Activated T-helper 1 cell treated with anti-CD3 and anti-CD28 coated beads, Interleukin-12 subunit alpha, Interleukin-12 subunit beta, Interleukin-2, Interleukin-4 antibody, amounts not matched to agents 30 ng/mL and 10 ng/mL and 1 ng/mL, durations not matched to agents 14 hours and 24 hours and 36 hours (primary cell): ENCODE measurements at regions of chr1 and their contacts with region 1.

Region 1: DNA sequence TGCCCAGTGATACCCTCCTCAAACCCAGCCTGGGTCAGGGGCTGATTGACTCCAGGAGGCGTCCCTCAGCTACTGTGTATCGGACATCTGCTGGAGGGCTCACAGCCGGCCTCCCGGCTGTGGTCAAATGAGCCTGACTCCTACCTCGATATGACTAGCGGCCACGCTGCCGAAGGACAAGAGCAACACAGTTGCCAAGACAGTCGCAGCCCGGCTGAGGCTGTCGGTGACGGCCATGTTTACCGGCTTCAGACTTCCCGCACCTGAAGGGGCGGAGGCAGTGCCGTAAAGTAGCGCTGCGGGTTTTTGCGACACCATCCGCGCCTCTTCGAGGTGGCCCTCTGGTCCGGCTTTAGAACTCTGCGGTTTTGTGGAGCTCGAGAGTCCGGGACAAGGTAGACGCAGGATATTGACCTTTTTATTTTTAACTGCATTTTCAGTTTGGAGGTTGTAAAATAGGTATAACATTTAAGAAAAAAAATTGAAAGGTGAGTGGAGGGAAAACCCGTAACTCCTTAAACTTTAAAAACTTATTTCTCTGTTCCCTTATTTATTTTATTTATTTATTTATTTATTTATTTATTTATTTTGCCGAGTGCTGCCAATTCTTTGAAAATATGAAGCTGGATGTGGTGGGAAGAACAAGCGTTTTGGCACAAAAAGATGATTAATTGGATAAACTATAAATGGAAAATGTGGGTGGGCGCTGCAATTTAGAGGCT is at the start of gene PIGK:
- DNase-seq: peak; percentile 85
- H3K4me3 Mint-ChIP-seq: peak within 1 kb of the TSS; percentile 92
- H3K27ac Mint-ChIP-seq: peak within 1 kb of the TSS; percentile 84
- H3K4me1 Mint-ChIP-seq: peaks cover 26% of the 10 kb centered on the region
- H3K27me3 Mint-ChIP-seq: no peaks in the 10 kb centered on the region
- total RNA-seq, gene PIGK: 15.9 and 19.4 TPM in 2 replicates

Region 2: GRCh38 chr1:75785983-75786853 is 1433.1 kb before region 1 on chr1 and contains the start of gene RABGGTB:
- intact Hi-C with region 1: loop called (anchors 5 kb)
- DNase-seq: peak; percentile 93
- H3K4me3 Mint-ChIP-seq: peak within 1 kb of the TSS; percentile 97
- H3K27ac Mint-ChIP-seq: peak within 1 kb of the TSS; percentile 99
- H3K4me1 Mint-ChIP-seq: peaks cover 46% of the 10 kb centered on the region
- H3K27me3 Mint-ChIP-seq: peaks cover 1% of the 10 kb centered on the region
- total RNA-seq, gene RABGGTB: 233 and 240 TPM in 2 replicates

Region 3: GRCh38 chr1:76269155-76269554 is 950.2 kb before region 1 on chr1:
- intact Hi-C with region 1: loop called (anchors 5 kb)
- DNase-seq: no peak
- H3K4me3 Mint-ChIP-seq: peak overlapping the region; percentile 48
- H3K27ac Mint-ChIP-seq: peak overlapping the region; percentile 77
- H3K4me1 Mint-ChIP-seq: peaks cover 71% of the 10 kb centered on the region
- H3K27me3 Mint-ChIP-seq: no peaks in the 10 kb centered on the region

Region 4: DNA sequence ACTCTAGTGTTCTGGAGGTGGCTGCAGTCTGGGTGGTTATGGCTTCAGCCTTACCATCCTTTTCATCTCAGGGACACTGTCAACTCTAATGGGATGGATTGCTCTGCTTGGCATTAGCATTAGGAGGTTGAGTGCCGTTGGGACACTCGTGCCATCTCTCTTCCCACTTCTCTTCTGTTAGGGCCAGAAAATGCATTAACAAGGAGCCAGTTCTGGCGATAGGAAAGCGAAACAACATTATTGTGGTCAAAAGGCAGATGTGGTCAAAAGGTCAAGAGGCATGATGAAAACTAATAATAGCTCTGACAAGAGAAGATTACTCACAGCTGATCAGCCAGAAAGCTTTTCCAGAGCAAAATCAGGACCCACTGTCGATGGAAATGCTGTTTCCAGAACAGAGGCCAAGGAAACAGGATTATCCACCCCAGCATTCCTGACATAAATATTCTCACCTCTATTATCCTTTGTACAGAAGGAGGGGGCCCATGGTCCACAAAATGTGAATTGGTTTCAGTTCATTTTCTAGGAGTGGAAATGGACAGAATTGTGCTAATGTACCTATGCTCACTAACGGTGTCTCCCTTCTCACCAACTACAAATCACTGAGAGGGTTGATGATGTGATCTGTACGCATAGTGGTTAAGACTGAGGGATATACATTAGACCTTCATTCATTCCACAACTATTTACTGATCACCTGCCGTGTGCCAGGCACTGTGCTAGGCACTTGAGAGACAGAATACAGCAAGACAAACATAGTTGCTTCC is 280.1 kb before region 1 on chr1:
- intact Hi-C with region 1: no loop called
- DNase-seq: no peak
- H3K4me3 Mint-ChIP-seq: no peak overlapping the region
- H3K27ac Mint-ChIP-seq: no peak overlapping the region
- H3K4me1 Mint-ChIP-seq: no peaks in the 10 kb centered on the region
- H3K27me3 Mint-ChIP-seq: no peaks in the 10 kb centered on the region

Region 5: DNA sequence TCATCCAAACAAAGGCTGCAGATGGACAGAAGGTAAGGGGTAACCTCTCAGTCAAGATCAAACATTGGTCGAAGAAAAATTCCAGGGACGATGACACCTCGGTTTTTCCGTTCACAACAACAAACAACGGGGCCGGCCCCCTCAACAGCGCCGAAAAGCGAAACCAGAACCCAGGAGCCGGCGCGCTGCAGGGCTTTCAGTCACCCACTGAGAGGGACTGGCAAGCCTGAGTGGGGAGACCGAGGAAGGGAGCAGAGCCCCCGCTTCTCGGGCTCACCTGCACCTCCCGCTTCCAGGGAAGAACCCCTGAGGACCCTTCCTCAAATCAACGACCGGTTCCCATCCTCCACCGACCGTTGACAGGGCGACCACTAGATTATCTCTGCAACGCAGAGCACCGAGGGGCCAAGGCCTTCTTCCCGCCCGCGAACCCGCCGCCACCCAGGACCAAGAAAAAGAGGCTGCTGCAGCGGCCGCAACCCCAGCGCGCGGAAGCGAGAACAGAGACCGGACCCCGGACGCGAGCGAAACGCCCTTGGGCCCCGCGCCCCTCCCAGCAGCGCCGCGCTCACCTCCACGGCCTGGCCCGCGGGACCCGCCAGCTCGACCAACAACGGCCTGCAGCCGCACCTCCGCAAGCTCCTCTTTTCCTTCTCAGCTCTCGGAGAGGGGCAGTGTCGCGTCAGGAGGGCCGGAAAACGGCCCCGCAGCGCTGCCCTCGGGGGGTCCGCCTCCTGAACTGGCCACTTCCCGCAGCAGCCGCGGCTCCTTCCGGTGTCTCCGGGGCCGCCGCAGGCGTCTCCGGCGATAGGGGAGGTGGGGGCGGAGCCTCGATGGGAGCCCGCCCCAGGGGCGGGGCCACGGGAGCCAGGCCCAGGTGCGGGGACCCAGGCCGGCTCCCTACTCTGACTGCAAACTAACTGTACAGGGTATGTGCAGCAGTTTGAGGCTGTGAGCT is 540.0 kb after region 1 on chr1 and contains the start of gene USP33:
- intact Hi-C with region 1: loop called (anchors 10 kb)
- DNase-seq: peak; percentile 89
- H3K4me3 Mint-ChIP-seq: peak within 1 kb of the TSS; percentile 92
- H3K27ac Mint-ChIP-seq: peak within 1 kb of the TSS; percentile 88
- H3K4me1 Mint-ChIP-seq: peaks cover 28% of the 10 kb centered on the region
- H3K27me3 Mint-ChIP-seq: peaks cover 2% of the 10 kb centered on the region
- total RNA-seq, gene USP33: 49.9 and 53.1 TPM in 2 replicates

Region 6: DNA sequence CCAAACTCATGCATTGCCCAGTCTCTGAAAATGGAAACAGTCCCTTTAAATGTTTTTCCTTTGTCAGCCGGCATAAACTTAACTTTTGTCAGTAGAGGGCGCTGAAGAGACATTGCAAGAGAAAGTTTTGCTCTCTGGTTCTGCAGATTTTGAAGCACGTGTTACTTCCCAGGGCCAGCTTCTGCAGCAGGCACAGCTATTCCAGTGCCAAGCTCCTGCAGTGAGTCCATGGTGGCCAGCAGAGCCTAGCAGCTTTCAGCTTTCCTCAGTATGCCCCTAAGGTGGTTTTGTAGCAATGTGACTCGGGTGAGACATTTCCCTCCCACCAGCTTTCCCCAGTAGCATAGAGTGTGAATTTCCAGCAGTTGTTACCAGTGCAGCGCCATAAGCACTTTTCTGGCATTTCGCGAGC is 1398.3 kb after region 1 on chr1:
- intact Hi-C with region 1: loop called (anchors 10 kb)
- DNase-seq: peak; percentile 53
- H3K4me3 Mint-ChIP-seq: peak overlapping the region; percentile 51
- H3K27ac Mint-ChIP-seq: peak overlapping the region; percentile 30
- H3K4me1 Mint-ChIP-seq: peaks cover 42% of the 10 kb centered on the region
- H3K27me3 Mint-ChIP-seq: peaks cover 13% of the 10 kb centered on the region